Right ventricle myocardium inferior (tissue), 1 donor: ENCODE measurements at regions of chr14 and their contacts with region 1.

Region 1: GRCh38 chr14:34035177-34035933 is 84.5 kb upstream of the EGLN3 start:
- DNase-seq: no peak
- ATAC-seq: peak; percentile 80

Region 2: DNA sequence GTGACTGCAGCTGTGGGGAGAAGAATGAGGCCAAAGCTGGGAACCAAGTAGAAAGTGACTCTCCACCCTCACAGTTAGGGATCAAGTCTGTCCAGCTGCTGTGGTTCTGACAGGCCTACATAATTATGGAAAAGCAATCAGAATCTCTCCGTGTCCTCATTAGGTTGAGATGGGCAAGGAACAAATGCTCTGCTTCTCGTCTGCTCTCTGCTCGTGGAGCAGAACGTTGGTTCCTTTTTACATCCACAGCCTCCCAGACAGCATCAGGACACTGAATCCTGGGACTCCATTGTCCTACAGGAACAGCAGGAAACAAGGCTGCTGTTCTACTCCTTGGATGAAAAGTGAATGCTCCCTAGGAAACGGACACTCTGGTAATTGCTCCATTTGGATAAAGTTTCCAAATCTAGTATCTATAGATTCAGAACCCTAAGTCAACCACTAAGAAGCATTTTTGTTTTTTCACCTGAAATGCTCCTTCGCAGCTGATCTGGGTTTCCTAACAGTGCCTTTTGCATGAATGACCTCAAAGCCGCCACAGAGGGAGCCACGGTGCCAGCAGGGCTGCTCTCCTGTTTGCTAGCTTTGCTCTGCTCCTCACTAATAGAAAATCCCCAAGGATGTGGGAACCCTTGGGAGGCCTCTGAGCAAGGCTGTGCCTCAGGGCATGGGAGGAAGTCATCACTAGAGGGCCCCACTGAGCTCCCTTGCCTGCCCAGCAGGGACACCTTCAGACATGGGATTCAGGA is 186.5 kb before region 1 on chr14:
- intact Hi-C with region 1: loop called (anchors 5 kb)
- DNase-seq: no peak
- ATAC-seq: peak; percentile 91

Region 3: DNA sequence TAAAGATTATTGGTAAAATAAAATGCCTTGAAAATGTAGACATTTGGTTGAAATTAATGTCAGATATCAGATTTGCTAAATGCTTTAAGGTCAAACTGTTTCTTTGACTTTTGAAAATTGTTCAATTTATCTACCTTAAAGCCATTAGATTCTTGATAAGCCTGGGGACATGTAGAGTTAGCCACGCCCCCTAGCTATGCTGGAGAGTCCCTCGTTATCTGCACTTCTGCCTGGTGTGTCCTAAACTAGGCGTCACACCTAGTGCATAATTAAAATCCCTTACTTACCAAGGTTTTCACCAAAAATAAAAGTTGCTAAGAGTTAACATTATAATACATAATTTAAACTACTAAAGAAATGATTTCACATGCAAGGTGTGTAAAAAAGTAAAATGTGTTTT is 164.0 kb before region 1 on chr14:
- intact Hi-C with region 1: no loop called
- DNase-seq: no peak
- ATAC-seq: no peak

Region 4: DNA sequence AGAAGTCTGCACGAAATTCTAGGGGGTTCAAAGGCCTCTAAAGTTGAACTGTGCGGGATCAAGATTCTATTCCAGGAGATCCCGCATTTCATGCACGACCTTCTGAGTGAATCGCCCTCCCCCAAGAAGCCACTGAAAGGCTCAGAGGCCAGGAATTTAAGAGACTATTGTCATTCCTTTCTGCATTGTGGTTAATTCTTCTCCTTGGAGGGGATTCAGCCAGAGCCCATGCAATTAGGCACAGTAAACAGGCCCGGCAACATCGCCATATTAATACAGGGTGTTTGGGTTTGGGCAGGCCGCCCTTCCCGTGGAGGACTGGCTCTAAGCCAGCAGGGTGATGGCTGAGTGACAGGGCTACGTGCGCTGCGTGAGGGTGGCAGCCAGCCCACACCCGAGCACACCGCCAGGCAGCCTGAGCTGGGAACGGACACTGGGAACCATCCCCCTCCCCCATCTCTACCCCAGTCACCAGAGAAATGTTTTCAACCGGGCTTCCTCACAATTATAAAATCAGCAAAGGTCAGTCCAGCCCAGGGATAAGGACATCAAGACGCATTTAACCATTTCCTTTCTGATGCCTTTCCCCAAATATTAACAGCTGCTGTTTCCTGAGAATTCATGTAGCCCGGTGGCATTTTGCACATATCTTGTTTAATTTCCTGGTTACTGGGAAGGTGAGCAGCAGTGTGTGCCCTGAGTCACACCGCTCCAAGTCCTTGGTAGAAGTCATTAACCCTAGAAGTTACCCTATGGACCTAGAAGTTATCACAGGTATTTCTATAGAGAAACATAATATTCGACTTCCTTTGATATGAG is 97.0 kb before region 1 on chr14:
- intact Hi-C with region 1: loop called (anchors 1 kb)
- DNase-seq: peak; percentile 89
- ATAC-seq: peak; percentile 93

Region 5: DNA sequence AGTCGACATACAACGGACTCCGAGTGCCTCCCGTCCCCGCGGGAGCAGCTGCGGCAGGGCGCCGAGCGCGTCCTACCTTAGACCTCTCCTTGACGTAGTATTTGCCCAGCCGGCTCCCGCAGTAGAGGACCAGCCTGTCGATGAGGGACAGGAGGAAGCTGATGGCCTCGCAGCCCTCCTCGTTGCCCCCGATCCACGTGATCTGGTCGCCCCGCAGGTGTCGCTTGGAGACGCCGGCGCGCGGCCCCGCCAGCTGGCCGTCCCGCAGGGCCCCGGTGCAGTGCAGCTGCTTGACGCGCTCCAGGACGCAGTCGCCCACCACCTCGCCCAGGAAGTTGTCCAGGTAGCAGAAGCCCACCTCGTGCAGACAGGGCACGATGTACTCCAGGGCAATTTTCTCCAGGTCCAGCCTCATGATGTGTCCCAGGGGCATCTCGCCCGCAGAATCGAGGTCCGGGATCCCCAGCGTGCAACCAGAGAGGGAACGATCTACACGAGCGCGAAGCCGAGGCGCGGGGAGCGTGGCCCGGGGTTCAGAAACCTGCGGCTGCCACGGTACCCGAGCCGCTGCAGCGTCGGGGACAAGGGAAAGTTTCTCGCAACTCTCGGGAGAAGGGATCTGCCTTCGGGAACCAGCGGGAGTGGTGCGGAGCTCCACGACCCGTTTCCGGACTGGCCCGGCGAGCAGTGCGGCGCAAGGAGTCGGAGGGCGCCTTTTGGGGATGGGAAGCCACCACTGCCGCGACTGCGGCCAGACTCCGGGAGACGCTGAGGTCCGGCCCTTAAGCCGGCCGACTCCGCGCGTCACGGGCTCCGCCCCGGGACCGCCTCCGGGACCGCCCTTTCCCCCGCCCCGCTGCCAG is 84.8 kb before region 1 on chr14 and contains the start of gene EGLN3:
- intact Hi-C with region 1: loop called (anchors 2 kb)
- DNase-seq: peak; percentile 93
- ATAC-seq: peak; percentile 99
- total RNA-seq, gene EGLN3: 136 TPM

Region 6: GRCh38 chr14:34059855-34060638 is 24.7 kb after region 1 on chr14:
- intact Hi-C with region 1: loop called (anchors 2 kb)
- DNase-seq: peak; percentile 89
- ATAC-seq: peak; percentile 94

Region 7: DNA sequence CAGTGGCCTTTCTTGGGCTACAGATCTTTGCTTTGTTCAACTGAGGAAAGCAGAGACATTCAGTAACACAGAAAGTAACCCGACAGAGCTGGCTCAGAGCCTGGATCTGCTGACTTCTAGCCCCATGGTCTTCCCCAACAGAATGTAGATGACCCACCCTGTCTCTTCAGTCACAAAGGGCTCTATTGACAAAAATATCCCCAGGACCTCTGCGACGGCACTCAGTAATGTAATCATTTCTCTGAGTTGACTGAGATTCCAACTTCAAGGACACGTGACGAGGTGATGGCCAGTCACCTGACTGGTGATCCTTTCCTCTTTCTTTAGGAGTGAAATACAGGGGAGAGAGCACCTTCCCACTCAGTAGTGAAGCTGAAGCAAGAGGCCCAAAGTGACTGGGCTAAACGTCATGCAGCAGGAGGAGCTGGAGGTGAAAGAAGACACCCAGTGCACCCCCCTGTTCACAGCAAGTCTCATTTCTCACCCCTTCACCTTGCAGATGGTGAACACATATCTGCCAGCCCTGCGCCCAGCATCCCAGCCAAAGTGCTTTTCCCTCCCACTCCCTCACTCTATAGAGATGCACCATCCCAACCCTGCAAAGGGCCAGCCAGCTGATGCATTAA is 94.7 kb after region 1 on chr14:
- intact Hi-C with region 1: loop called (anchors 2 kb)
- DNase-seq: no peak
- ATAC-seq: no peak

Region 8: GRCh38 chr14:34165829-34166350 is 130.5 kb after region 1 on chr14:
- intact Hi-C with region 1: no loop called
- DNase-seq: no peak
- ATAC-seq: no peak